Caco-2 (cell line): ENCODE measurements at regions of chr6 and their contacts with region 1.

Region 1: GRCh38 chr6:74939151-74939708 is 266.6 kb downstream of the COL12A1 start:
- DNase-seq: peak; percentile 56 to 57
- H3K4me3 ChIP-seq: no peak overlapping the region
- H3K4me3 Mint-ChIP-seq: no peak overlapping the region
- H3K27ac Mint-ChIP-seq: no peak overlapping the region
- H3K4me1 ChIP-seq: no peaks in the 10 kb centered on the region
- H3K4me1 Mint-ChIP-seq: peaks cover 5% of the 10 kb centered on the region
- H3K27me3 ChIP-seq: no peaks in the 10 kb centered on the region
- H3K27me3 Mint-ChIP-seq: no peaks in the 10 kb centered on the region
- CTCF ChIP-seq: peak in 1 of 2 experiments; percentile 40

Region 2: DNA sequence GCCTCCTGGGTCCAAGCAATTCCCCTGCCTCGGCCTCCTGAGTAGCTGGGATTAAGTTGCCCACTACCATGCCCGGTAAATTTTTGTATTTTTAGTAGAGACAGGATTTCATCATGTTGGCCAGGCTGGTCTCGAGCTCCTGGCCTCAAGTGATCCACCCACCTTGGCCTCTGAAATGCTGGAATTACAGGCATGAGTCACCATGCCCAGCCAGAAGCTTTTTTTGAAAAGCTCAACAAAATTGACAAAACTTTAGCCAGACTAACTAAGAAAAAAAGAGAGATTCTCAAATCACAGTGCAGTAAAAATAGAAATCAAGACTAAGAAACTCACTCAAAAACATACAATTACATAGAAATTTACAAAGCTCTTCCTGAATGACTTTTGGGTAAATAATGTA is 154.0 kb before region 1 on chr6:
- CTCF ChIA-PET with region 1: no interaction called
- POLR2A ChIA-PET with region 1: no interaction called
- intact Hi-C with region 1: no loop called
- DNase-seq: no peak
- H3K4me3 ChIP-seq: no peak overlapping the region
- H3K4me3 Mint-ChIP-seq: no peak overlapping the region
- H3K27ac Mint-ChIP-seq: no peak overlapping the region
- H3K4me1 ChIP-seq: no peaks in the 10 kb centered on the region
- H3K4me1 Mint-ChIP-seq: no peaks in the 10 kb centered on the region
- H3K27me3 ChIP-seq: no peaks in the 10 kb centered on the region
- H3K27me3 Mint-ChIP-seq: peaks cover 8% of the 10 kb centered on the region
- CTCF ChIP-seq: no peak

Region 3: GRCh38 chr6:74991573-74992332 is 52.5 kb after region 1 on chr6:
- CTCF ChIA-PET with region 1: no interaction called
- POLR2A ChIA-PET with region 1: no interaction called
- intact Hi-C with region 1: loop called (anchors 1 kb)
- DNase-seq: peak in 1 of 2 experiments; percentile 3
- H3K4me3 ChIP-seq: no peak overlapping the region
- H3K4me3 Mint-ChIP-seq: no peak overlapping the region
- H3K27ac Mint-ChIP-seq: no peak overlapping the region
- H3K4me1 ChIP-seq: no peaks in the 10 kb centered on the region
- H3K4me1 Mint-ChIP-seq: no peaks in the 10 kb centered on the region
- H3K27me3 ChIP-seq: no peaks in the 10 kb centered on the region
- H3K27me3 Mint-ChIP-seq: no peaks in the 10 kb centered on the region
- CTCF ChIP-seq: peak in 1 of 2 experiments; percentile 9

Region 4: DNA sequence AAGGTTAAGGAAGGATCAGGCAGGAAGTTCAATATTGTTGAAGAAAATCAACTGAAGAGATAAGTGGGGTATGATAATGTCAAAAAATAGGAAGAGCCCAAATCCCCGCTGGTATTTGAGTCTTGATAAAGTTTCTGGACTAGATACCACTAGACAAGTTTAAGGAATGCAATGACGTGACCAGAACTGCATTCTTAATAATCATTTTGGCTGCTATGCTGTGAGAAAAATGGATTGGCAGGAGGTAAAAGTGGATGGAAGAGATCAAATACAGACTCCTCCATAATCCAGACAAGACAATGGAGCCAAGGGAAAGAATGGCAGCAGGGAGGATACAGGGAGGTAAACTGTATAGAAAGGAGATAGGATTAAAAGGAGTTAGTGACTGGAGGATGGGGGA is 138.5 kb after region 1 on chr6:
- CTCF ChIA-PET with region 1: no interaction called
- POLR2A ChIA-PET with region 1: no interaction called
- intact Hi-C with region 1: loop called (anchors 10 kb)
- DNase-seq: no peak
- H3K4me3 ChIP-seq: no peak overlapping the region
- H3K4me3 Mint-ChIP-seq: no peak overlapping the region
- H3K27ac Mint-ChIP-seq: no peak overlapping the region
- H3K4me1 ChIP-seq: no peaks in the 10 kb centered on the region
- H3K4me1 Mint-ChIP-seq: peaks cover 7% of the 10 kb centered on the region
- H3K27me3 ChIP-seq: no peaks in the 10 kb centered on the region
- H3K27me3 Mint-ChIP-seq: no peaks in the 10 kb centered on the region
- CTCF ChIP-seq: no peak

Region 5: DNA sequence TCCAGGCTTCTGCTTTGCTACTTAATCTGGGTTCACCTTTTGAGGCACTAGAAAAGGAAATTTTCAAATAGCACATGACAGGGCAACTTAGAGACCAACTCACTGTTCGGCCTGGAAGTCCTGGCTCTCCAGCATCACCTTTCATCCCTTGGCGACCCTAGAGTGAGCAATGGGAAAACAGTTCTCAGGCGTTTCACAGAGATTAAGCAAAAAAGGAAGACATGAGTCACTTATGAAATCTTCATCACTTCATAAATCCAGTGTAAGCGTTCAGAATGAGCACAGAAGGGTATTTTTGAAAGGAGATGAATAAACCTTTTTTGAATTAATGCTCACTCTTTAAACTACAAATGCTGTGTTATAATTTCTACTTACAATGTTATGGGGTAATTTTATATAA is 162.7 kb after region 1 on chr6:
- CTCF ChIA-PET with region 1: no interaction called
- POLR2A ChIA-PET with region 1: no interaction called
- intact Hi-C with region 1: loop called (anchors 10 kb)
- DNase-seq: no peak
- H3K4me3 ChIP-seq: no peak overlapping the region
- H3K4me3 Mint-ChIP-seq: no peak overlapping the region
- H3K27ac Mint-ChIP-seq: no peak overlapping the region
- H3K4me1 ChIP-seq: peaks cover 24% of the 10 kb centered on the region
- H3K4me1 Mint-ChIP-seq: peaks cover 31% of the 10 kb centered on the region
- H3K27me3 ChIP-seq: no peaks in the 10 kb centered on the region
- H3K27me3 Mint-ChIP-seq: no peaks in the 10 kb centered on the region
- CTCF ChIP-seq: no peak